ENCODE measurements at regions of chr1 and their contacts with region 1.

Region 1: DNA sequence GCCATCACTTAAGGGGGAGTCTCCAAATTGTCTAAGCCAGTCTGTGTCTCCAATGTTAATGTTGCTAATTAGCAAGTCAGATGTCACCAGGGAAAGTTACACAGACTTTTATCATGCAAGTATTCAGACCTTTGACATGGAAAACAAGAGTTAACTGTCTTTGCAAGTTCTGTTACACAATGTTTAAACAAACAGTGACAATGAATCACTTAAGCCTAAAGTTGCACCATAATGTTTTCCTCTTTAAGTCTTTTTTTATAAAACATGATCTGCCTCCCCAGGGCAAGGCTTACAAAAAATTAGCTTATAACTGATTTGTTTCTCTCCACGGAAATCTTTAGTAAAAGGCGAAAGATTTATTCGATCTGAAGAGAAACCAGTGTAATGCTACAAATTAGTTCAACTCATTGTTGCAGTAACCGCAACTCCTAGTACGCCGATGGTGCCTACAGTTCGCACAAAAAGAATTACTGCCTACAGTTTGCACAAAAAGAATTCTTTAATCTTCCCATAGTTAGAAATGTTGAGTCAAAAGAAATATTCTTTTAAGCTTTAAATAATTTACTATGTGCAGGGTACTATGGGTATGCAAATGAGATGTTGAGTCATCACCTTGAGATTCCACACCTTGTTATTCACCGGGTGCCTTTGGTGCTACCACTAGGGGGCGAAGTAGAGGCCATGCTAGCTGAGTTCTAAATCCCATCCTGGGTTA is 45.3 kb downstream of the HHAT start:
- DNase-seq: peak; percentile 100
- H3K4me3 Mint-ChIP-seq: peak overlapping the region; percentile 57
- H3K27ac Mint-ChIP-seq: peak overlapping the region; percentile 100
- H3K4me1 Mint-ChIP-seq: peaks cover 47% of the 10 kb centered on the region
- H3K27me3 Mint-ChIP-seq: no peaks in the 10 kb centered on the region
- CTCF ChIP-seq: peak; percentile 100

Region 2: DNA sequence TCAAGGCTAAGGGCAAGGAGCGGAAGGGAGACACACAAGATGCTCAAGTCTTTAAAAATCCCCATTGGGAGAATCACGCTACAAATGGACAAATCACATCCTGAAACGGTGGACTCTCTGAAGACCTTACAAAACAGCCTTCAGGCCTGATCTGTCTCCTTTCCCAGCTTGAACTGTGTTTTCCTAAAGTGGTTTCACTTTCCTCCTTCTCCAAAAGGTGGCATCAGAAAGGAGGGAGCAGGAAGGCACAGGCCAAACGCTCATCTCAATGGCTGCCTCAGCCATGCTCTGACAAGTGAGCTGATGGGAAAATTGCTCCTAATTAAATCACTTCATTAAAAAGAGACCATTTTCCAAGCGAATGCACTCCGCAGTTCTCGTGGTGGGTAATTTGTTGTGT is 498.5 kb before region 1 on chr1:
- CTCF ChIA-PET with region 1: no interaction called
- POLR2A ChIA-PET with region 1: no interaction called
- intact Hi-C with region 1: loop called (anchors 5 kb)
- DNase-seq: peak; percentile 83
- H3K4me3 Mint-ChIP-seq: no peak overlapping the region
- H3K27ac Mint-ChIP-seq: peak overlapping the region; percentile 98
- H3K4me1 Mint-ChIP-seq: peaks cover 89% of the 10 kb centered on the region
- H3K27me3 Mint-ChIP-seq: no peaks in the 10 kb centered on the region
- CTCF ChIP-seq: peak; percentile 33

Region 3: DNA sequence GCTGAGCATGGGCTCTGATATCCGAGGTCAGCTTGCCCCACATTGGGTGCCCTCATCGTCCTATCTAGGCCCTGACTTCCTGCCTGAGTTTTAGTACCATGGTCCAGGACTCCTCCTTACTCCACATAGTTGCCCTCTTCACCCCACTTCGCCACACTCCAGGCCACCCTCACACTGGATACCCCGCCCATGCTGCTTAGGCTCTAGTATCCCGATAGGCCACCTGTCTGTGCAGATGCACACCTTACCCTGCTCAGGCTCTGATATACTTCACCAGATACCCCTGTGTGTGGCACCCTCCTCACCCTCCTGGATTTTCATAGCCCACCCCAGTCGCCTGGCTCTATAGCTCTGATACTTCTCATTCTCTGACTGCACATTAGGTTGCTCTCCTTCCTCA is 287.0 kb before region 1 on chr1:
- CTCF ChIA-PET with region 1: no interaction called
- POLR2A ChIA-PET with region 1: no interaction called
- intact Hi-C with region 1: no loop called
- DNase-seq: no peak
- H3K4me3 Mint-ChIP-seq: no peak overlapping the region
- H3K27ac Mint-ChIP-seq: no peak overlapping the region
- H3K4me1 Mint-ChIP-seq: no peaks in the 10 kb centered on the region
- H3K27me3 Mint-ChIP-seq: peaks cover 20% of the 10 kb centered on the region
- CTCF ChIP-seq: no peak

Region 4: DNA sequence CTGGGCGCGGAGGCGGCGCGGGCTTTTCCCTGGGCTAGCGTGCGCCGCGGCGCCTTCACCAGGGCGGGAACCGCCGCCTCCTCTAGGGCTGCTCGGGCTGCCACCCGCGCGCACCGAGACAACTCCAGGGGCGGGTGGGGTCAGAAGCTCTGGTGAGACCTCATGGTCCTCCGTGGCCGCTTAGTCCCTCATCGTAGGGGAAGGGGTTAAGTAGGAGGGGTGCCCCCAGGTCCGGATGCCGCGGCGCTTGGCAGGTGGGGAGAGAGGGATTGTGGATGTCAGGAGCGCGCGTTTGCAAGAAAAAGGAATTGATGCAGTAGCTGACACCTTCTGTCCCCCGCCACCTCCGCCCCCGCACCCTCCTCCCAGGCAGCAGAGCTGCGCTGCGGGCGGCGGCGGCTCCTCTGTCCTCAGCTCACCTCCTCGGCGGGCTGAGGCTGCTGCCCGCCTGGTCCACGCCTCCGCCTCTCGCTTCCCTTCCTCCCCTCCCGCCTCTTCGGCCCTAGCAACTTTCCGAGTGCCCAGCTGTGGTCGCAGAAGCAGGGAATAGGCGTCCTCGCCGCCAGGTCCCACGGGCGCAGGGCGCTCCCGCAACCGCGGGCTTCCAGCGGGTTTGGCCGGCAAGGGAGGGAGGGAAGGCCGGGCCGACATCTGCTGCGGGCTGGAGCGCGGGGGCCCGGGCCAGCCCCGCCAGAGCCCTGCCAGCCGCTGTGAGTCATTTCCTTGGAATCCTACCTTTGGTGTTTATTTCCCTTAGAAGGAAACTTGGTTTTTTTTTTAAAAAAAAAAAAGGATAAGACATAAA is 140.6 kb before region 1 on chr1:
- CTCF ChIA-PET with region 1: no interaction called
- POLR2A ChIA-PET with region 1: no interaction called
- intact Hi-C with region 1: loop called (anchors 5 kb)
- DNase-seq: peak; percentile 89
- H3K4me3 Mint-ChIP-seq: peak overlapping the region; percentile 69
- H3K27ac Mint-ChIP-seq: no peak overlapping the region
- H3K4me1 Mint-ChIP-seq: peaks cover 17% of the 10 kb centered on the region
- H3K27me3 Mint-ChIP-seq: no peaks in the 10 kb centered on the region
- CTCF ChIP-seq: no peak

Region 5: DNA sequence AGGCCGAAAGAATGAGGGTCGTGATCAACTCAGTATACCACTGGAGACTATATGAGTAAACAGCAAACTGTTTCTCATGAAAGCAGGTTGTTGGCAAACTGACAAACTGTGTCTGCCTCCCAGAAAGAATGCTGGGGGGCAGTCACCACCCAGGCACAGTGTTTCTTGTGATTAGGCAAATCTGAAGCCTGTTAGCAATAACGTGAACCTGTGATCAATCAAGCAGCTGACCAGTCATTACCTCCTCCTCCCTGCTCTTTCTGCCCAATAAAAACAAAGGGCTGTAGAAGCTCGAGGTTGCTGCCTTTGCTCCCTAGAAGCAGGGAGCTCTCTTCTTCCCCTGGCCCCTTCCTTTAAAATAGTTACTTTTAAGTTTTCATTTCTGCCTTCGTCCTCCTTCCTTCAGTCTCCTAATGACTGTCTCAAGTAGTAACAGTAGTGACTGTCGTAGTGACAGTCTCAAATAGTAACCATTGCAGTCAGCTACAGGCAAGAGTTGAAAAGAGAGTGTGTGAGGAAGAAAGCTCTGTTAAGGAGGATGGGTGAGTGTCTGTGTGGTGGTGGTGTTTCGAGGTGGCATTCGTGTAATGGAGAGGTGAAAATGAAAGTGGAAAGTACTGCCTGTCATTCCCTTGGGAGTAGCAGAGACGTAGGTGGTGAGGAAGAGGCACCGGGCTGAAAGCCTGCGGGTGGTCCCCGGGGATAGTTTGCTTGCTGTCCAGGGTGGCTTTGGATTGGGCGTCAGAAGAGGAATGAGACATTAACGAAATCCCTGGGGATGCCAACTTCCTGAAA is 30.9 kb before region 1 on chr1:
- CTCF ChIA-PET with region 1: interaction called, 53 read pairs
- POLR2A ChIA-PET with region 1: interaction called, 3 read pairs
- intact Hi-C with region 1: no loop called
- DNase-seq: peak; percentile 33
- H3K4me3 Mint-ChIP-seq: no peak overlapping the region
- H3K27ac Mint-ChIP-seq: no peak overlapping the region
- H3K4me1 Mint-ChIP-seq: no peaks in the 10 kb centered on the region
- H3K27me3 Mint-ChIP-seq: no peaks in the 10 kb centered on the region
- CTCF ChIP-seq: no peak

Region 6: GRCh38 chr1:210360852-210361477 is 13.1 kb before region 1 on chr1:
- CTCF ChIA-PET with region 1: interaction called, 417 read pairs
- POLR2A ChIA-PET with region 1: interaction called, 35 read pairs
- intact Hi-C with region 1: no loop called
- DNase-seq: peak; percentile 76
- H3K4me3 Mint-ChIP-seq: no peak overlapping the region
- H3K27ac Mint-ChIP-seq: no peak overlapping the region
- H3K4me1 Mint-ChIP-seq: peaks cover 18% of the 10 kb centered on the region
- H3K27me3 Mint-ChIP-seq: no peaks in the 10 kb centered on the region
- CTCF ChIP-seq: peak; percentile 83

Region 7: DNA sequence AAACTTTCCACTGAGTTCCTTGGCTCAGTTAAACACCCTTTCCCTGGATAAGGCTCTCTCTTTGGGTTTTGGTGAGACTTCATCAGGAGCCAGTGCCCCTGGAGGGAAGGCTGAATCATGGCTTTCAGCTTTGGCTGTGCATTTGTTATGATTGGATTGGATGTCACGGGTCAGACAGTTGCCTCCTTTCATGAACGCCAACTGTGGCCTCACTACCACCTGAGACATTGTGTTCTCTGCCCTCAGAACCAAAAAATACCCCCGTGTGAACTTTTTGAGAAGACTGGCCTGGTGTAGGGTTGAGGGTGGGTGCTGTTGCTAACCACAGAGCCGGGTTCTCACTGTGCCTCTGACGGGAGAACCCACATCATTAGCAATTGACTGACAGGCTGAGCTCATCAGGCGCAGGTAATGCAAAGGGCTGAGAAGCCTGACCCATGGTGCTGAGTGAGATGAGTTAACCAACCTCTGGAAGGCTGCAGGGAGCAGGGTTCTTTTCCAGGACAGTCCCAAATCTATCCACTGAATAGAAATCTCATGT is 20.3 kb after region 1 on chr1:
- CTCF ChIA-PET with region 1: interaction called, 812 read pairs
- POLR2A ChIA-PET with region 1: interaction called, 16 read pairs
- intact Hi-C with region 1: no loop called
- DNase-seq: peak; percentile 65
- H3K4me3 Mint-ChIP-seq: no peak overlapping the region
- H3K27ac Mint-ChIP-seq: no peak overlapping the region
- H3K4me1 Mint-ChIP-seq: peaks cover 28% of the 10 kb centered on the region
- H3K27me3 Mint-ChIP-seq: no peaks in the 10 kb centered on the region
- CTCF ChIP-seq: no peak

Region 8: DNA sequence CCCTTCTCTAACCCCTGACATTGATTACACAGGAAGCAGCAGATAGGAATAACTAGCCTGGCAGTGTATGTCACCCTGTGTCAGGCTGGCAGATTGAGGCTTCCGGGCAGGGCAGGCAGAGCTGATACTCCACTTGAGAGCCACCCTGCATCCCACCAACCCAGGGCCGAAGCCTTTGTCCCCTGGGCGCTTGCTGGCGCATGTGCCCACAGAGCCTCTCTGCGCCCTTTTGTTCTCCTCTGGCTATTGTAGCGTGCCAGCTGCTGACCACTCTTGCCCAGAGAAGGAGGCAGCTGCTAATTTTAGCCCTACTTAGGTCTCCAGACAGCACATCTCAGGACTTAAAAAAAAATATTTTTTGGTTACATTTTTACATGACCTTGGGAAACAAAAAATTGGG is 259.6 kb after region 1 on chr1:
- CTCF ChIA-PET with region 1: no interaction called
- POLR2A ChIA-PET with region 1: no interaction called
- intact Hi-C with region 1: no loop called
- DNase-seq: no peak
- H3K4me3 Mint-ChIP-seq: no peak overlapping the region
- H3K27ac Mint-ChIP-seq: no peak overlapping the region
- H3K4me1 Mint-ChIP-seq: no peaks in the 10 kb centered on the region
- H3K27me3 Mint-ChIP-seq: peaks cover 9% of the 10 kb centered on the region
- CTCF ChIP-seq: no peak

Region 9: DNA sequence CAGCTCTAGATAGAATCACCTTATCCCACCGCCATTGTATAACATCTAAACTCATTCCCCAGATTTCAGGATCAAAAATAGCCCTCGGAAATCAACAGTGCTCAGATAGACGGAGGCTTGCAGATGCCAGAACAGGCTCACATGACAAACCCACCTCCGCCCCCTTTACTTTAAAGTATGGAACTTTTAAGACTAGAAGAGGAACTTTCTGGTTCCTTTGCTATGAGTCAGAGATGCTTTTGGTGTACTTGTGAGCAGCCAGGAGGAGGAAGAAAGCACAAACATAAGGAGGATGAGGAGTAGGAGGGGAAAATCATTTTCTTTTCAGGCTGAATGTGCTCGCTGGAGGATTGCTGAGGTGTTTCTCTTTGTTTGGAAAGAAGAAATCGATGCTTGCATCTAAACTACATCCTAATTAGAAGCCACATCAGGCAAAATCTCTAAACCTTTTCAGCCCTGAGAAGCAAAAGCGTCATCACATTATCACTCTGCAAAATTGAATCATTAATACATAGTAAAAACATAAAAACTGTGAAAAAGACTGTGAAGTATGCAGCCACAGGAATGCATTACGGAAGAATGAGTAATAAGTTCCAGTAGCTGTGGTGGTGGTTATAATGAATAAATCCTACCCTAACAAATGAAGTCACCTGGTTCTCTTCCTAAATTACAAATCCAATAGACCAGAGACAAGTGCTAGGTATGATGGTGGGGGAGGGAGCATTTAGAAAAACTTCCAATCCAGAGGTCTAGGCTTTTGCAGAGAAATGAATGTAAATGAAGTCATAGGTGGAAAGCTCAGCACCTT is 508.6 kb after region 1 on chr1:
- CTCF ChIA-PET with region 1: no interaction called
- POLR2A ChIA-PET with region 1: no interaction called
- intact Hi-C with region 1: loop called (anchors 5 kb)
- DNase-seq: peak; percentile 87
- H3K4me3 Mint-ChIP-seq: peak overlapping the region; percentile 57
- H3K27ac Mint-ChIP-seq: peak overlapping the region; percentile 46
- H3K4me1 Mint-ChIP-seq: peaks cover 31% of the 10 kb centered on the region
- H3K27me3 Mint-ChIP-seq: no peaks in the 10 kb centered on the region
- CTCF ChIP-seq: no peak